ENCODE measurements at regions of chr5 and their contacts with region 1.

Region 1: GRCh38 chr5:115586601-115587048 is 15.7 kb downstream of the TICAM2 start:
- DNase-seq: no peak
- H3K4me3 Mint-ChIP-seq: no peak overlapping the region
- H3K27ac Mint-ChIP-seq: no peak overlapping the region
- H3K4me1 Mint-ChIP-seq: peaks cover 2% of the 10 kb centered on the region
- H3K27me3 Mint-ChIP-seq: peaks cover 2% of the 10 kb centered on the region

Region 2: DNA sequence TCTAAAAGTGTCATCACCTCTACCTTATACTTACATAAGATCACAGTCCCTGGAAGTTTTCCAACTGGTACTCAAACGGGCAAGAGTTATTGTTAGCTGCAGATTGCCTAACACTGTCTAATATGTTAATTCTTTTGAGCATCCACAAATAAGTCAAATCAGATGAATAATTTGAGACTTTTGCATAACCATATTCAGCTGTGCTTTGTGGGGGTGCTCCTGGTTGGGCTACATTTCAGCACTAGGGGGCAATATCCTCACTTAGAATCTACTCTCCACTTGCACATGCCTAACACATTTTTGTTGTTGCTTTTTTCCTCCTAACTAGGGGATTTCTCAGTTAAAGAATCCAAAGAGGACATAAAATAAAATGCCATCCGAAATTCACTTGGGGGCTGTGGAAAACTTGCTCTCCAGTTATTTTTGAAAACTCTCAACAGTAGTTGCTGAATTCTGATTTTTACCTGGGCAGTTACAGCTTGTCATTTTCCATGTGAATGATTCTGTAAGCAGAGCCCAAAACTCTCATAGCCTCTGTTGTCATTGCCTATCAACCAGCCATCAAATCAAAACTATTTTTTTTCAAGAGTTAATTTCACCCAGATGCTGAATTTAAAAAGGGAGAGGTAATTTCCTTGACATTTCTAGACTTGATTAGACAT is 488.5 kb before region 1 on chr5:
- intact Hi-C with region 1: loop called (anchors 2 kb)
- DNase-seq: peak; percentile 8
- H3K4me3 Mint-ChIP-seq: no peak overlapping the region
- H3K27ac Mint-ChIP-seq: no peak overlapping the region
- H3K4me1 Mint-ChIP-seq: no peaks in the 10 kb centered on the region
- H3K27me3 Mint-ChIP-seq: peaks cover 7% of the 10 kb centered on the region

Region 3: DNA sequence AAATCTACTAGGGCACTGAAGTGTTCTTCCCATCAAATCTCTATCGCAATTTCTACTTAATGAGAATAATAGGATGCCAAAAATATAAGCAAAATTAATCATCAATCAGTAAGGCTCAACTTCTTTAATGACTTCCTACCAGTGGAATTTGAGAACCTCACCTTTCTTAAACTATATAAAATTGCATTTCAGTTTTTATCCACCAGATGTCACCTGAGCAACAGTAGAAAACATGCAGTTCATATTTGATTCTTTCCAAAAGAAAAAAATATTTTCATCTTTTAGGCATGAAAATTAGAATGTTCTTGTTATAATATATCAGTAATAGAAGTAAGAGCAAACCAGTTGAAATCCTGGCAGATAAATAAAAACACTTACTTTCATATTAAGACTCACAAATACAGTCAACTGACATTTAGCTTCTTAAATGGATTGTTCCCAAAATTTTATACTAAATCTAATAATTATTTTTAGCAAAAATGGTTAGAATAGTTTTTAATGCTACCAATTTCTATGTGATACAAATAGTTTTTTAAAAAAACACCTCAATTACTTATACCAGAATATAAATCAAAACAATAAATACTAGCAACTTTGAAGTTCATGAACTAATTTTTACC is 276.8 kb before region 1 on chr5:
- intact Hi-C with region 1: loop called (anchors 1 kb)
- DNase-seq: no peak
- H3K4me3 Mint-ChIP-seq: no peak overlapping the region
- H3K27ac Mint-ChIP-seq: no peak overlapping the region
- H3K4me1 Mint-ChIP-seq: no peaks in the 10 kb centered on the region
- H3K27me3 Mint-ChIP-seq: peaks cover 32% of the 10 kb centered on the region

Region 4: DNA sequence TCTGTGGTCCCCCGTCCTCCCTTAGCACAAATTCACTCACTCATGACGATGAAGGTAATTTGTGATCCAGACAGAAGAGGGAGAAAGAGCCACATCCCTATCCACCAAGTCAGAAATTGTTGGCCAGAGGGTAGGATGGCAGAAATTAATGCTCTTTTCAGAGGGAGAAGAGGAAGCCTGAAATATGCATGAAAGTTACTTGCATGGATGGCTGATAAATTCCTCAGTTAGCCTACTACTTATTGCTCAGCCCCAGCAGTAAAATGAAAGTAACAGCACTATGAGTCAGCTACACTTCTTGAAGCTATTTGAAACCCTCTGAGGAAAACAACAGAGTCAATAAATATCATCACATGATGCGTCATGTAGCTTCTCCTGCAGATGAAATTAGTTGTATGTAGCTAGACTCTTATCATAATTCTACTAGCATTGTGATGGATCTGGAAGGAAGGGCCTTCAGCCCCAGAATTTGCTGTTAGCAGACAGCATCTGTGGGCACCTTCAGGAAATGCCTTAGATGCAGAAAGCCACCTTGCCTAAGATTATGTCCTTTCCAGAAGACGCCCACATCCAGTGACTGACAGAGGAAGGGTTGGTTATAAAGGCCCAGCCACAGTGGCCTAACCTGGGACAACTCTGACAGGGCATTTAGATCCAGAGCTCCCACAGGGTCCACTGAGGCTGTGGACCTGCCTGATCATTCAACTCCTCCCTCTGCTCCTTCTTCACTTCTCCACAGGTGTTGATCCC is 209.0 kb before region 1 on chr5:
- intact Hi-C with region 1: loop called (anchors 5 kb)
- DNase-seq: no peak
- H3K4me3 Mint-ChIP-seq: no peak overlapping the region
- H3K27ac Mint-ChIP-seq: peak overlapping the region; percentile 5
- H3K4me1 Mint-ChIP-seq: peaks cover 29% of the 10 kb centered on the region
- H3K27me3 Mint-ChIP-seq: peaks cover 3% of the 10 kb centered on the region

Region 5: GRCh38 chr5:115565233-115565632 is 21.4 kb before region 1 on chr5:
- intact Hi-C with region 1: no loop called
- DNase-seq: no peak
- H3K4me3 Mint-ChIP-seq: no peak overlapping the region
- H3K27ac Mint-ChIP-seq: no peak overlapping the region
- H3K4me1 Mint-ChIP-seq: no peaks in the 10 kb centered on the region
- H3K27me3 Mint-ChIP-seq: peaks cover 18% of the 10 kb centered on the region

Region 6: DNA sequence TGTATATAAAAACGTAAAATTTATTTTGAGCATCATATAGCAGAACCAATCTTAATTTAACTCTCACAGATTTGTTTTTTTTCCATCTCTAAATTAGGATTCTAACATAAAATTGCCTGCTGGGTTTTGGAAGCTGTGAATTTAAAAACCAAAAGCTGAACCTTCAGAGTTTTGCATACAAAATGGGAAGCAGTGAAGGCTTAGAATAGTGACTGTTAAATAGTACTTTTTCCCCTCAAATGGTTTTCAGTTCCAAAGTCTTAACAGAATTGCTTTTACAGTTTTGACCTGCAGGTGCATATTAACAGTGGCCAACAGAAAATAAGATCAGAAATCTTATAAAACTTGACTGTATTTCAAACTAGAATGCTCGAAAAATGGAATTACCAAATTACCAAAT is 320.6 kb after region 1 on chr5:
- intact Hi-C with region 1: no loop called
- DNase-seq: no peak
- H3K4me3 Mint-ChIP-seq: no peak overlapping the region
- H3K27ac Mint-ChIP-seq: no peak overlapping the region
- H3K4me1 Mint-ChIP-seq: no peaks in the 10 kb centered on the region
- H3K27me3 Mint-ChIP-seq: no peaks in the 10 kb centered on the region

Region 7: GRCh38 chr5:116068028-116068632 is 481.5 kb after region 1 on chr5:
- intact Hi-C with region 1: loop called (anchors 5 kb)
- DNase-seq: peak; percentile 9
- H3K4me3 Mint-ChIP-seq: no peak overlapping the region
- H3K27ac Mint-ChIP-seq: no peak overlapping the region
- H3K4me1 Mint-ChIP-seq: no peaks in the 10 kb centered on the region
- H3K27me3 Mint-ChIP-seq: peaks cover 43% of the 10 kb centered on the region